ENCODE measurements at regions of chr15 and their contacts with region 1.

Region 1: DNA sequence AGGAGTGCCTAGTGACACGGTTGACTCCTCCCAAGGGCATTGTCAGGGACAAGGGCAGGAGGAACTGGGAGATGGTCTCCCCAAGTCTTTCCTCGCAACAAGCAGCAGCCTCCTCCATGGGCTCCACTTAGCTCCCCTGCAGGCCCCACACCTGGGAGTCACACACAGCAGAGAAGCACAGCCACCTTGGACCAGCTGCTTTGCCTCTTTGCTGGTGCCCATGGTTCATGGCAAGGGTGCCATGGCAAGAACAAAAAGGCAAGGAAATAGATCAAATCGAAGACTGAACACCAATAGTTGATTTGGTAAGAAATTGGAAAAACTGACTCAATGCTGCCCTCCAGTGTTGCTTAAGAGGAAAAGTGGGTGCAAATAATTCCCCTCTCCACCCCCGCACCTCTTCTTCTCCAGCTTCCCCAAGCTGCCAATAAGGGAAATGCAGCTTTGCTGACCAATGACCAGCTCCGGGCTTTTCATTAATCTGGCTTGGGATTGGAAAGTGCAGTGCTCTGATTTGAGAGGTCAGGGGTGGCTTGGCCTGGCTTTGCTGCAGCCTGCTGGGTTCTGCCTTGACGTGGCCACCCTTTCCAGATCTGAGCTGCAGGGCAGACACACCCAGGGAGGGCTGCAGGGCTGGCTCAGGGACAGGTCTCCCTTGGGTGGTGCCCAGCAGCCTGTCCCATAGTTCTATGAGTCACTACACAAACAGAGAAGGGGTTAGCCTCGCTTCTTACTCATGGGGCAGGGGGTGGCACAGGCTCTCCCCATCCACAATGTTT is 162.0 kb downstream of the KLF13 start:
- DNase-seq: peak; percentile 88
- H3K4me3 Mint-ChIP-seq: no peak overlapping the region
- H3K27ac Mint-ChIP-seq: peak overlapping the region; percentile 57
- H3K4me1 Mint-ChIP-seq: peaks cover 23% of the 10 kb centered on the region
- H3K27me3 Mint-ChIP-seq: no peaks in the 10 kb centered on the region
- CTCF ChIP-seq: peak; percentile 90

Region 2: GRCh38 chr15:30991255-30992072 is 497.2 kb before region 1 on chr15 and contains the start of gene MTMR10:
- CTCF ChIA-PET with region 1: interaction called, 5 read pairs
- POLR2A ChIA-PET with region 1: no interaction called
- intact Hi-C with region 1: loop called (anchors 5 kb)
- DNase-seq: peak; percentile 65
- H3K4me3 Mint-ChIP-seq: peak within 1 kb of the TSS; percentile 92
- H3K27ac Mint-ChIP-seq: peak within 1 kb of the TSS; percentile 97
- H3K4me1 Mint-ChIP-seq: peaks cover 13% of the 10 kb centered on the region
- H3K27me3 Mint-ChIP-seq: no peaks in the 10 kb centered on the region
- CTCF ChIP-seq: no peak
- total RNA-seq, gene MTMR10: 11.4 and 13.0 TPM in 2 replicates

Region 3: GRCh38 chr15:31206386-31206785 is 282.2 kb before region 1 on chr15:
- CTCF ChIA-PET with region 1: interaction called, 20 read pairs
- POLR2A ChIA-PET with region 1: no interaction called
- intact Hi-C with region 1: no loop called
- DNase-seq: no peak
- H3K4me3 Mint-ChIP-seq: no peak overlapping the region
- H3K27ac Mint-ChIP-seq: no peak overlapping the region
- H3K4me1 Mint-ChIP-seq: no peaks in the 10 kb centered on the region
- H3K27me3 Mint-ChIP-seq: no peaks in the 10 kb centered on the region
- CTCF ChIP-seq: no peak

Region 4: DNA sequence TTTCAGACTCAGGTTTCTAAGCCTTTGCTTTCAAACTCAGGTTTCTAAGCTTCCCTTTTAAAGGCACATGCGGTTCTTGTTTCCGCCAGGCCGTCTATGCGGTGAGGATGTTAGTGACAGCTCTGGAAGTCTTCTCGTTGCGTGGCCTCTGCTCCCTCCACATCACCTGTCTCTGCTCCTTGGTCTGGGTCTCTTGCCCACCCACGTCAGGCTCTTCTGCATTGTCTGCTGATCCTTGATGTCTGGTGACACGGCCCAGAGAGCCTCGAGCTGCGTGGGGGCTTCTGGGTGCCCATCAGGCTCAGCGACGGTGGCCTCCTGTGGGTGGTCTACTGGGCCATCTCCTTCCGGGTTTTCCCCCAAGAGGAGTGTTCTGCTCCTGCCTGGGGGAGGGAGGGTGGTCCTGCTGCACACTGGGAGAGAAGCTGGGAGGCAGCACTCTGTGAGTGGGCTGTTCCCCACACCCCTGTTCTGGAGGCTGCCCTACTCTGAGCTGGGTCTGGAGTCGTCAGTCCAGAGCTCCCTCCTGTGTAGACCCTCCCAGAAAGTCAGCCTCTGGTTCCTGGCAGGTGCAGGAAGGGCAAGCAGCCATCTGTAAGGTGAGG is 131.4 kb before region 1 on chr15:
- CTCF ChIA-PET with region 1: interaction called, 182 read pairs
- POLR2A ChIA-PET with region 1: no interaction called
- intact Hi-C with region 1: no loop called
- DNase-seq: no peak
- H3K4me3 Mint-ChIP-seq: no peak overlapping the region
- H3K27ac Mint-ChIP-seq: peak overlapping the region; percentile 74
- H3K4me1 Mint-ChIP-seq: peaks cover 47% of the 10 kb centered on the region
- H3K27me3 Mint-ChIP-seq: no peaks in the 10 kb centered on the region
- CTCF ChIP-seq: no peak

Region 5: DNA sequence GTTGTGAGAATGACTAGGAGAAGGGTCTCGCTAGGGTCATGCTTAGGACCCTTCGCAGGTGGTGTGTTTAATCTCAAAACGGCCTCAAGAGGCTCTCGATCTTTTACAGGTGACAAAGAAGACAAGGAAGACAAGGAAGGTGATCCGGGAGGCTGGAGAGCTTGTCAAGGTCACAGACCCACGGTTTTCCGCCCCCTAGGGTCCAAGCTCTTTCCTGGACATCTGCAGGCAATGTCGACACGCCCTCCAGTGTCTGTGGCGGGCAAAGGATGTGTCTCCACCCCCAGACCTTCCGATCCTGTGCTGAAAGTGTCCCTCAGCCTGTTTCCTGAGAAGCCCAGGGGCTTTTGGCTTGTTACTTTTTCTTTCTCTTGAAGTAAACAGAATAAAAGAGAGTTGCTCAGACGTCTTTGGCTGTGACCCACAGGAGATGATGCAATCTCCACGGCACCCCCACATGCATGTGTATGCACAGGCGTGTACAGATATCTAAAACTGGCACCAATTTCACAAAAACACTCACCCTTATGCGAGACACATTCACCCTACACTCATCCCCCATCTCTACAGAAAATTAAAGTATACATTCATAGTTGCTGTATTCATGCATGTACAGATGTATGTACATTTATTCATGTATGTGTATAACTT is 53.2 kb before region 1 on chr15:
- CTCF ChIA-PET with region 1: interaction called, 116 read pairs
- POLR2A ChIA-PET with region 1: interaction called, 4 read pairs
- intact Hi-C with region 1: loop called (anchors 1 kb)
- DNase-seq: peak; percentile 89
- H3K4me3 Mint-ChIP-seq: peak overlapping the region; percentile 26
- H3K27ac Mint-ChIP-seq: peak overlapping the region; percentile 90
- H3K4me1 Mint-ChIP-seq: peaks cover 15% of the 10 kb centered on the region
- H3K27me3 Mint-ChIP-seq: no peaks in the 10 kb centered on the region
- CTCF ChIP-seq: peak; percentile 50

Region 6: GRCh38 chr15:31465083-31465955 is 23.3 kb before region 1 on chr15:
- CTCF ChIA-PET with region 1: interaction called, 37 read pairs
- POLR2A ChIA-PET with region 1: interaction called, 13 read pairs
- intact Hi-C with region 1: no loop called
- DNase-seq: peak; percentile 80
- H3K4me3 Mint-ChIP-seq: peak overlapping the region; percentile 66
- H3K27ac Mint-ChIP-seq: peak overlapping the region; percentile 90
- H3K4me1 Mint-ChIP-seq: peaks cover 10% of the 10 kb centered on the region
- H3K27me3 Mint-ChIP-seq: no peaks in the 10 kb centered on the region
- CTCF ChIP-seq: no peak

Region 7: DNA sequence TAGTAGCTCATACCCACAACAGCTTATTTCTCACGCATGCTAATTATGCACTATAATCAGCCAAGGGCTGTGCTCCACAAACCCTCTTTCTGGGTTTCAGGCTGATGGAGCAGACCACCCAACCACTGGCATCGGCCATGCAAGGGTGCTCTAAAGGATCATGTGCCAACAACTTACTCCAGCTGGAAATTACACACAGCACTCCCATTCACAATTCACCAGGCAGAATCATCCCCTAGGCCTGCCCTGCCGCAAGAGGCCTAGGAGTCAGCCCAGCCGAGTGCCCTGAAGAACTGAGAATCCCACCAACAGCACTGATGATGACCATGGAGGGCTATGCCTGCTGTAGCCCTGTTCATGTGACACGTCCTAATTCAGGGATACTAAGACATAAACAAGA is 325.5 kb after region 1 on chr15:
- CTCF ChIA-PET with region 1: no interaction called
- POLR2A ChIA-PET with region 1: no interaction called
- intact Hi-C with region 1: no loop called
- DNase-seq: no peak
- H3K4me3 Mint-ChIP-seq: no peak overlapping the region
- H3K27ac Mint-ChIP-seq: no peak overlapping the region
- H3K4me1 Mint-ChIP-seq: no peaks in the 10 kb centered on the region
- H3K27me3 Mint-ChIP-seq: no peaks in the 10 kb centered on the region
- CTCF ChIP-seq: no peak

Region 8: DNA sequence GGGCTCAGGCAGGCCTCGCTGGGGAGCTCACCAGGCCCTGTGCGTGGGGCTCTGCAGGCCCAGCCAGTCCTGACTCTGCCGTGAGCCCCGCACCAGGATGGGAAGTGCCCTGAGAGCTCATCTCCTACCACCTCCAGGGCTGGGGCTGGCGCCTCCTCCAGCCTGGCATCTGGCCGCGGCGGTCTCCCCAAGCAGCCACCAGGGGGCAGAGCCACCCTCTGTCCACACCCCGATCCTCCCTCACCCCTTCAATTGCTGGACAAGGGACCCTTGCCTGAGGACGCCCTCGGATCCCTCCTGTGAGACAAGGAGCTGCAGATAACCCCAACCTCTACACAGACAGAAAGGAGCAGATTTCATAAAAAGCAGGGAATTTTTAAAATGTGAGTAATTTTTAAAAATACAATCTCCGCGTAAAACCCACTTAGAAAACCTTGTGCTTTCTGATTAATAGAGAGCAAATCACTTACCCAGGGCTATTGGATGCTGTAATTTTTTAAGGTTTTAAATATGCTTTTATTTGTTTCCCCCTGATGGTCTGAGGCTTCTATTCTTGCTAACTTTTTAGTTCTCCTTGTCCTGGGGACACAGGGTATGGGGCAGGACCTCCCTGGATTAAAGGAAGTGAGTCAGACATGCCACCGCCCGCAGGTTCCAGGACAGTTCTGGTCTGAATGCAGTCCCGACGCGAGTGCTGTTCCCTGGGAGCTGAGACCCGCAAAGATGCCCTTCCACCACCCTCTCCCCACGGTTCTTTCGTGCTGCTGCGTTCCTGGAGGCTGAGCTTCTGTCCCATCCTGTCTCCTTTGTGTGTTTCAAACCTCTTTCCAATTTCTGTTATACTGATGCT is 489.4 kb after region 1 on chr15:
- CTCF ChIA-PET with region 1: interaction called, 4 read pairs
- POLR2A ChIA-PET with region 1: no interaction called
- intact Hi-C with region 1: loop called (anchors 5 kb)
- DNase-seq: peak; percentile 49
- H3K4me3 Mint-ChIP-seq: no peak overlapping the region
- H3K27ac Mint-ChIP-seq: no peak overlapping the region
- H3K4me1 Mint-ChIP-seq: peaks cover 13% of the 10 kb centered on the region
- H3K27me3 Mint-ChIP-seq: peaks cover 46% of the 10 kb centered on the region
- CTCF ChIP-seq: peak; percentile 83